Endothelial cell of umbilical vein (primary cell): ENCODE measurements at regions of chr5 and their contacts with region 1.

Region 1: DNA sequence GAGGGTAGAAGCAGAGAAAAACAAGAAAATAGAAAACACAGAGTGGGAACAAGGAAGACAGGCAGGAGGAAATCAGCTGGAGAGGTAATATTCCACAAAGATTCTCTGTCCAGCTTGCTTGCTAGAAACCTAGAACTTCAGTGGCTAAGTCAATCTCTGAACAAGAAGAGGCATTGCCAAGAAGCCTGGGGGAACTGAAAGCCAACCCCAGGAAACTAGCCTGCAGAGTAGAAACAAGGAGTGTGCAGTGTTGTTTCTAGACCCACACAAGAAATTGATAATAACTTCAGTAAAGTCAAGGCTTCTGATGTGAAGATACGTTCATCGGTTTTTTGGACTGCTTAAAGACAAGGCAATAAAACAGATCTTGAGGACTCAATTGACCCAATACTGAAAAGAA is 234.5 kb upstream of the MAP3K1 start:
- DNase-seq: no peak
- H3K4me3 ChIP-seq: no peak overlapping the region
- H3K27ac ChIP-seq: no peak overlapping the region
- H3K4me1 ChIP-seq: peaks cover 6% of the 10 kb centered on the region
- H3K27me3 ChIP-seq: peaks cover 12 to 15% of the 10 kb centered on the region in 2 experiments
- CTCF ChIP-seq: no peak
- POLR2A ChIP-seq: no peak

Region 2: GRCh38 chr5:56328753-56329560 is 251.9 kb before region 1 on chr5:
- CTCF ChIA-PET with region 1: no interaction called
- POLR2A ChIA-PET with region 1: no interaction called
- dilution Hi-C with region 1: no loop called
- intact Hi-C with region 1: no loop called
- DNase-seq: peak; percentile 72
- H3K4me3 ChIP-seq: no peak overlapping the region
- H3K27ac ChIP-seq: peak overlapping the region; percentile 93
- H3K4me1 ChIP-seq: peaks cover 27% of the 10 kb centered on the region
- H3K27me3 ChIP-seq: no peaks in the 10 kb centered on the region
- CTCF ChIP-seq: no peak
- POLR2A ChIP-seq: no peak

Region 3: GRCh38 chr5:56490951-56491468 is 89.9 kb before region 1 on chr5:
- CTCF ChIA-PET with region 1: no interaction called
- POLR2A ChIA-PET with region 1: no interaction called
- dilution Hi-C with region 1: no loop called
- intact Hi-C with region 1: no loop called
- DNase-seq: no peak
- H3K4me3 ChIP-seq: no peak overlapping the region
- H3K27ac ChIP-seq: no peak overlapping the region
- H3K4me1 ChIP-seq: no peaks in the 10 kb centered on the region
- H3K27me3 ChIP-seq: peaks cover 6 to 16% of the 10 kb centered on the region in 2 experiments
- CTCF ChIP-seq: no peak
- POLR2A ChIP-seq: no peak

Region 4: DNA sequence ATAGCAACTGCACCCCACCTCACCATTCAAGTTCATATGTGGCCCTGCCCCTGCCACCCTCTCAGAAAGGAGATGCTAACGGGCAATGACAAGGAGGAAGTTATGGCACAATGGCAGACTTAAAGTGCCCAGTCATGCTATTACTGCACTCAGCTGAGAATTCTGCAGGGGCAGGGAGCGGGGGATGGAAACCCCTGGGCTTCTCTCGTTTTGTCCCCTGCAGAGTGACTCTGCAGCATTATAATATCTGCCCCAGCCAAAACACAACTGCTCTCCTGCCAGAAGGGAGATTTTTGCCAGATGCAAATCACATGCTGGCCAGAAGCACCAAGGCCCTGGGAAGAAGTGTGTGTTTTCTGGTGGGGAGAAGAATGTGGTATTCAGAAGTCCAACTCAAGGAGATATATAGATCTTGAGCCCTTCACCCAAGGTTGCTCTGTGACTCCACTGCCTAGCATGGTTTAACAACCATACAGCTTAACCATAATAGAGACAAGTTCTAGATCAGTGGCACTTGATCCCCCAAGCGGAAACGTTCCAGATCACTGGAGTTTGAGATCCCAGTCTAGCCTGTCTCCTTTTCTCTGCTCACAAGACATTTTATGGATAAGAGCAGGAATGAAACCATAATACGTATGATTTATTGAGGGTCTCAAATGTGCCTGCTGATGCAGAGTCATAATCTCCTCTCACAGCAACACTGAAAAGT is 27.5 kb after region 1 on chr5:
- CTCF ChIA-PET with region 1: no interaction called
- POLR2A ChIA-PET with region 1: no interaction called
- dilution Hi-C with region 1: no loop called
- intact Hi-C with region 1: loop called (anchors 1 kb)
- DNase-seq: no peak
- H3K4me3 ChIP-seq: no peak overlapping the region
- H3K27ac ChIP-seq: no peak overlapping the region
- H3K4me1 ChIP-seq: no peaks in the 10 kb centered on the region
- H3K27me3 ChIP-seq: peaks cover 0 to 5% of the 10 kb centered on the region in 2 experiments
- CTCF ChIP-seq: no peak
- POLR2A ChIP-seq: no peak